HEK293 (cell line): ENCODE measurements at regions of chr4 and their contacts with region 1.

Region 1: GRCh38 chr4:139603576-139604387 is 47.8 kb upstream of the SETD7 start:
- H3K4me3 ChIP-seq: no peak overlapping the region
- H3K27ac ChIP-seq: no peak overlapping the region
- H3K4me1 ChIP-seq: no peaks in the 10 kb centered on the region
- CTCF ChIP-seq: no peak

Region 2: GRCh38 chr4:139227729-139228404 is 375.9 kb before region 1 on chr4:
- CTCF ChIA-PET with region 1: no interaction called
- POLR2A ChIA-PET with region 1: no interaction called
- H3K4me3 ChIP-seq: no peak overlapping the region
- H3K27ac ChIP-seq: no peak overlapping the region
- H3K4me1 ChIP-seq: no peaks in the 10 kb centered on the region
- CTCF ChIP-seq: no peak

Region 3: GRCh38 chr4:139253713-139254112 is 350.1 kb before region 1 on chr4:
- CTCF ChIA-PET with region 1: no interaction called
- POLR2A ChIA-PET with region 1: no interaction called
- H3K4me3 ChIP-seq: no peak overlapping the region
- H3K27ac ChIP-seq: no peak overlapping the region
- H3K4me1 ChIP-seq: no peaks in the 10 kb centered on the region; the same call in 1 of the 2 replicates
- CTCF ChIP-seq: no peak

Region 4: DNA sequence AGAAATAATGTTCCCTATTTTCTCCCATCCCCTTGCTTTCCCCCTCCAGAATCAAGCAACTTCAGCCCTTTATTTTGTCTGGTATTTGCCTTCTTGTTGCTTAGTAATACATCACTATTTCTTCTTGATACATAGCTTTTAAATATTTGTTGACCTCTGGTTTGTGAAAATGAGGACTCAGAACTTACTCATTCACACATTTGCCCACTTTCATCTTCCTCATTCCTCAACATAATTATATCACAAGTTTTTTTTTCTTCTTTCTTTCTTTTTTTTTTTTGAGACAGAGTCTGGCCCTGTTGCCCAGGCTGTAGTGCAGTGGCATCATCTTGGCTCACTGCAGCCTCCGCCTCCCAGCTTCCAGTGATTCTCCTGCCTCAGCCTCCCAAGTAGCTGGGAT is 272.6 kb before region 1 on chr4:
- CTCF ChIA-PET with region 1: no interaction called
- POLR2A ChIA-PET with region 1: no interaction called
- H3K4me3 ChIP-seq: no peak overlapping the region
- H3K27ac ChIP-seq: no peak overlapping the region
- H3K4me1 ChIP-seq: no peaks in the 10 kb centered on the region
- CTCF ChIP-seq: no peak

Region 5: DNA sequence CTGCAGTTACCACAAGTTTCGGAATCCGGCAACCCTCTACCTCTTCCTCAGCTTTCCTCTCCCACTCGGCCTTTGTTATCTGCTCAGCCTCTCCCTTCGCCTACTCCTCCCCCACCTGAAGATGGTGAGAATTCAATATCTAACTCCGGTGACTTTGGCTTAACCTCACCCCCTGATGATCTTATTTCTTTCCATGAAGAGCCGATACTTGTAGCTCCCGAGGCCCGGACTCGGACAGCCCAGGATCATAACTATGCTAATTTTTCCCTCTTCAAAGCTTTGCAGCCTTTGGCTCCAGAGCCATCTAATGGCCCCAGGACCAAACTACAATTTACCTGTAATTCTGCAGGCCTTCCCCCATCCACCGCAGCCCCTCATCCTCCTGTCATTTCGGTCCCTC is 29.9 kb after region 1 on chr4:
- CTCF ChIA-PET with region 1: interaction called, 28 read pairs
- POLR2A ChIA-PET with region 1: no interaction called
- H3K4me3 ChIP-seq: no peak overlapping the region
- H3K27ac ChIP-seq: no peak overlapping the region
- H3K4me1 ChIP-seq: no peaks in the 10 kb centered on the region
- CTCF ChIP-seq: peak; percentile 30; the same call in 1 of the 2 replicates

Region 6: GRCh38 chr4:139651282-139652194 is 47.8 kb after region 1 on chr4:
- CTCF ChIA-PET with region 1: interaction called, 29 read pairs
- POLR2A ChIA-PET with region 1: no interaction called
- H3K4me3 ChIP-seq: no peak overlapping the region
- H3K27ac ChIP-seq: no peak overlapping the region
- H3K4me1 ChIP-seq: no peaks in the 10 kb centered on the region
- CTCF ChIP-seq: peak; percentile 54; the same call in 1 of the 2 replicates

Region 7: DNA sequence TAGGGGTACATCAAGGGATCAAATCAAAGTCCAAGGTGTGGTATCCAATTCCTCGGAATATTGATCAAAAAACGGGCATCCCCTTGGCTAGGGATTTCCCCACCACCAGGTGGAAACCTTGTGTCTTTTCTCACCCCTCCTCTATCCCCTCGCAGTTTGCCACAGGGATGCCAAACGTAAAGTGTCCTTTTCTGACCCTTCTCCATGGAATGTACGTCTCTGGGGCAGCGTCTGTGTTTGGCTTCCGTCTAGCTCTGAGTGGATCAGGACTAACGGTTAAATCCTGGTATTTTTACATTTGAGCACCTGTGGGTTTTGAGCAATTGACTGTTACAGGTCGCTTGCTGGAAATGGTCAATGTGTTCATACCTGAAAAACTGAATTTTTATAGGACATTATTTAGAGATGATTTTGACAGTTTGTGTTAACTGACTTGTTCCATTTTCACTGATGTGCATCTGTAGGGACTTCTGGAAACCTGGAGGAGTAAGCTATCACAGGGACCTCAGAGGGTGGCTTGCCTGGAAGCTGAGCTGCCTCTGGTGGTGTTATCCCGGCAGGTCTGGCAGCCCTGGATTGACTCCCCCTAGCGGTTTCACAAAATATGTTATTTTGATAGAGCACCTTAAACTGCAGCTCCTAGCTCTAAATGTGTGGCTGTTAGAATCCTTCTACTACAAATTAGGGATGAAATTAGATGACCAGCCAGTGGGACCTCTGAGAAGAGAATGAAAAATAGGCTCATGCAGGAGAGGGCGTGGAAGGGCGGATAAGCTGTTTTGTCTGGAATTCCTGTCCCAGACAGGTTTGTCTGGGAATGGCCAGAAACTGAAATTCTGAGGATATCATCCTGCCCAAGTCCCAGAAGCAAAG is 53.1 kb after region 1 on chr4:
- CTCF ChIA-PET with region 1: interaction called, 29 read pairs
- POLR2A ChIA-PET with region 1: no interaction called
- H3K4me3 ChIP-seq: no peak overlapping the region
- H3K27ac ChIP-seq: no peak overlapping the region
- H3K4me1 ChIP-seq: no peaks in the 10 kb centered on the region
- CTCF ChIP-seq: peak; percentile 42; the same call in 1 of the 2 replicates